ENCODE measurements at regions of chr22 and their contacts with region 1.

Region 1: DNA sequence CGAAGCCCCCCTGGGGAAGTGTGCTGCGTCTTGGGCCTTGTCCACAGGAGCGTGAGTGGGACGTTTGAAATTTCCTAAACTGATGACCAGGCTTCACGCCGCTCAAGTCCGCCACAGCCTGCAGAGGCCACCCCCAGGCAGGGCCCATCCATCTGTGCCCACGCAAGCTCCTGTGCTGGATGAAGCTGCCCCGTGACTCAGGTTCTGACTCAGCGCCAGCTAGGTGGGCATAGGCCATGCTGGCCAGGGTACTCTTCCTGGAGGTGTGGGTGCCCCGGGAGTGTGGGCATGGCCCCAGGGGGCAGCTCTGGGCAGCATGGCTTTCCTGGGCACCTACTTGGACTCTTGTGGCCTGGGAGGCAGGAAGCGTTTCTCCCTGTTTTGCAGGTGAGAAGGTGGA is 134.8 kb downstream of the CACNA1I start:
- DNase-seq: no peak
- ATAC-seq: no peak
- H3K4me3 ChIP-seq: no peak overlapping the region
- H3K4me3 Mint-ChIP-seq: no peak overlapping the region
- H3K27ac ChIP-seq: no peak overlapping the region
- H3K27ac Mint-ChIP-seq: no peak overlapping the region
- H3K4me1 ChIP-seq: no peaks in the 10 kb centered on the region
- H3K4me1 Mint-ChIP-seq: no peaks in the 10 kb centered on the region
- H3K27me3 ChIP-seq: peaks cover 0 to 29% of the 10 kb centered on the region in 2 experiments
- H3K27me3 Mint-ChIP-seq: peaks cover 0 to 2% of the 10 kb centered on the region in 2 donors

Region 2: GRCh38 chr22:40276996-40277823 is 571.8 kb after region 1 on chr22:
- CTCF ChIA-PET with region 1: no interaction called
- POLR2A ChIA-PET with region 1: interaction called in 1 of 2 experiments, 10 read pairs
- DNase-seq: no peak
- ATAC-seq: no peak
- H3K4me3 ChIP-seq: no peak overlapping the region
- H3K4me3 Mint-ChIP-seq: peak overlapping the region in 1 of 3 donors; percentile 93
- H3K27ac ChIP-seq: peak overlapping the region; percentile 74
- H3K27ac Mint-ChIP-seq: peak overlapping the region; percentile 53 to 89
- H3K4me1 ChIP-seq: peaks cover 16 to 21% of the 10 kb centered on the region in 2 experiments
- H3K4me1 Mint-ChIP-seq: peaks cover 45 to 72% (median 72%) of the 10 kb centered on the region in 3 donors
- H3K27me3 ChIP-seq: no peaks in the 10 kb centered on the region
- H3K27me3 Mint-ChIP-seq: no peaks in the 10 kb centered on the region

Measured in T-cell (primary cell).